WTC11 (cell line): ENCODE measurements at regions of chr18 and their contacts with region 1.

Region 1: GRCh38 chr18:74196220-74197119 is 48.1 kb downstream of the TIMM21 start:
- DNase-seq: no peak
- ATAC-seq: peak; percentile 80
- H3K4me3 Mint-ChIP-seq: peak overlapping the region; percentile 54
- H3K27ac Mint-ChIP-seq: peak overlapping the region; percentile 88
- H3K4me1 Mint-ChIP-seq: peaks cover 19% of the 10 kb centered on the region
- H3K27me3 Mint-ChIP-seq: no peaks in the 10 kb centered on the region
- CTCF ChIP-seq: peak; percentile 80

Region 2: DNA sequence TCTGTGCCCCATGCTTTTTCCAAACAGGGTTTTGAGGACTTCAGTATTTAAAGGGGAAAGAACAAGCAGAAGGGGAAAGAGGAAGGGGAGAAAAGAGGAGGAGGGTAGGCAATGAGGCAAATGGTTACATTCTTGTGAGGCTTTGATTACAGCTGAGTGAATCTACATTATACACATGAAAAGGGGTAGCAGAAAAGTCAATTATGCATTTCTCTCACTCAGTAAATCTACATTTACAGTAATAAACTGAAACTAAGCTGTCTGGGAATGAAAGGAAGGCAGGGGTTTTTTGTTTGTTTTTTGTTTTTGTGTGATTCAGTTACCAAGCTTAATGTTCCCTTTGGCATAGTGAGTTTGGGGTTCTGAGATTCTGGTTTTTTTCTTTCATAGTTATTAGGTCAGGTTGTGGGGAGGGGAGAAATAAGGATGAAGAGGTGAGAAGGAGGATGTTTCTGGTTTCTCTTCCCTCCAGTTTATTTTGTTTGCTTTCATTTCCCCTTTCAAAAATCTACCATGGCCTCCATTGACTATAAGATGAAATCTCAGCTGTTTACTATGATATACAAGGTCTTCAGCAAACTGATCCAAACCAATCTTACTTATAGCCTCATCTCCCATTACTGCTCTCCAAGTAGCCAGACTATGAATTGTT is 137.9 kb after region 1 on chr18:
- CTCF ChIA-PET with region 1: interaction called, 10 read pairs
- POLR2A ChIA-PET with region 1: no interaction called
- DNase-seq: no peak
- ATAC-seq: no peak
- H3K4me3 Mint-ChIP-seq: no peak overlapping the region
- H3K27ac Mint-ChIP-seq: no peak overlapping the region
- H3K4me1 Mint-ChIP-seq: peaks cover 20% of the 10 kb centered on the region
- H3K27me3 Mint-ChIP-seq: no peaks in the 10 kb centered on the region
- CTCF ChIP-seq: no peak

Region 3: DNA sequence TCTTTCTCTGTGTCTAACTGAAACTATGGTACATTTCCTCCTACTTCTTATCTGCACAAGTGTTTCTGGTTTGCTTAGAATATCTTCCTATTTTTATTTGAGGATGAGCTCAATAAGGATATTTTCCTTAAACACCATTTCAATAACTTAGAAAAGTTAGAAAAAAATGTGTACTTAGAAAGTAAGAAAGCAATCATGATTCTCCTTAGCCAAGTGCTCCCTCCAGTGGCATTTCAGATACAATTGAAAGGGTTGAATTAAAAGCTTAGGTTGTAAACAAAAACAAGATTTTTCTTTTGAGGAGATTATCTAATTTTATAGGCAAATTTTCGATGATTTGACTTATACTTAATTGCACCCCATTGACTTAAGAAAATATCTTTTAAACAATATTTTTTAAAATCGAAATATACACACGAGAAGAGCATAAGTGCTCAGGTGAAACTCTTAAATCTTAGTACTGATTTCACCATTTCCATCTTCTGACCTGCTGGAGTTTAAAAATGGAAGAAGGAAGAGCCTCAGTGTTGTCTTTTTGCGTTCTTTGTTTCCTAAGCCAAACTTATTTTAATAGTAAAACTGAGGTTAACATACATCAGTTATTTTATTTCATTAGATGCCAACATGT is 146.1 kb after region 1 on chr18:
- CTCF ChIA-PET with region 1: interaction called, 46 read pairs
- POLR2A ChIA-PET with region 1: no interaction called
- DNase-seq: no peak
- ATAC-seq: no peak
- H3K4me3 Mint-ChIP-seq: no peak overlapping the region
- H3K27ac Mint-ChIP-seq: no peak overlapping the region
- H3K4me1 Mint-ChIP-seq: peaks cover 7% of the 10 kb centered on the region; the same call in 1 of the 2 replicates
- H3K27me3 Mint-ChIP-seq: no peaks in the 10 kb centered on the region
- CTCF ChIP-seq: peak; percentile 46

Region 4: DNA sequence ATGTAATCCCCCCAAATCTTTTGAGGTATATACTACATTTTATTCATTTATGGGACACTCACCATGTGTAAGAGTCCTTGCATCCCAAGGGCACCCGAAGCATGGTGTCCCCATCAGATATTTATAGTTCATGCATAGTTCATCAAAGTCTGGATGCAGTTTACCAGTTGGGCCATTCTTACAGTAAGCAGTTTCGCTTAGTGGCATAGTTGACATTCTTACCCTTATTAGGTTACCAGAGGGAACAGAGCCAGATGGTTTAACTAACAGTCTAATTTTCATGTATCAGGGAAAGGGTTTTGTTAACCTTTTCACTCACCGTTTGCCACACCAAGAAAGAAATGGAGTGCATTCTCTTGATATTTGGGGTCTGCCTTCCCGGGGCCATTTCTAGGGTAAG is 408.3 kb after region 1 on chr18:
- CTCF ChIA-PET with region 1: no interaction called
- POLR2A ChIA-PET with region 1: no interaction called
- DNase-seq: no peak
- ATAC-seq: no peak
- H3K4me3 Mint-ChIP-seq: no peak overlapping the region
- H3K27ac Mint-ChIP-seq: no peak overlapping the region
- H3K4me1 Mint-ChIP-seq: peaks cover 5% of the 10 kb centered on the region; the same call in 1 of the 2 replicates
- H3K27me3 Mint-ChIP-seq: no peaks in the 10 kb centered on the region
- CTCF ChIP-seq: no peak